ENCODE measurements at regions of chr11 and their contacts with region 1.

Region 1: DNA sequence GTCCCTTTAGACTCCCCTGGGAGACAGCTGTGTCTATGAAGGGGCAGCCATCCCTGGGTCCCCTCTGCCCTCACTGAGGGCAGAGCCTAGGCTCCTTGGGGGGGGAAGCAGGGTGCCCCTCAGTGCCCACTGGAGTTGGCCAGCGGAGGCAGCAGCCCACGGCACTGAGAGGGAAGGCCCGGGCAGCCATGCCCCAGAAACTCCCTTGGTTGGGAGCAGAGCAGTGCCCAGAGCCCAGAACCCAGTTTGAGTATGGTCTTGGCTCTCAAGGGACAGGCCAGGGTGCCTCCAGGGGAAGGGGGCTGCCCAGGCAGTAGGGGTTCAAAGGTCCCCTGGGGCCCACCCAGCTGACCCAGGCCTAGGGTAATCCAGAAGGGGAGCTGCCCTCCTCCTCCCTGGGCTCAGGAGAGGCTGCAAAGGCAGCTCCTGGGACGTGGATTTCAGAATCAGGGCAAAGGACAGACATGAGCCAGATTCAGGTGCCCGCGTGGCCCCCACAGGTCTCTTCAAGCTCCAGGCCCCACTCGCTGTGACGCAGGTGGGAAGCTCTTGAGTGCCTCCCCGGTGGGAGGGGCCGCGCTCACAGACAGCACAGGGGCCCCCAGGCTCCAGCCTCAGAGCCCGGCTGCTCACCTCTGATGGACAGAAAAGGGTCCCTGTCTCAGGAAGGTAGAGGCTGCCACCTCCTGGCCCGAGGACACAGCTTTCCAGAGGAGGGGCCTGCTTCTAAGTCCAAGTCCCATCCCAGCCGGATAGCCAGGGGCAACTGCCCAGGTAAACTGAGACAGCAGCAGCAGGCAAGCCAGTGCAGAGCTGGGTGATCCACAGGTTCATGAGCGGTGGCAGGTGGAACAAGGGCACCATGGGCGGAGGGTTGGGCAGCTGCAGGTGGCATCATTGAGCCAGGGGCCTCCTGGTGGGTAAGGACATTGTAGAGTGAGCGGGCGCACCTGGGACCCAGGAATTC is 2.6 kb downstream of the C11orf21 start:
- DNase-seq: peak; percentile 72
- ATAC-seq: peak; percentile 91
- H3K4me3 Mint-ChIP-seq: no peak overlapping the region
- H3K27ac Mint-ChIP-seq: no peak overlapping the region
- H3K4me1 Mint-ChIP-seq: no peaks in the 10 kb centered on the region
- H3K27me3 Mint-ChIP-seq: peaks cover 4% of the 10 kb centered on the region
- CTCF ChIP-seq: no peak

Region 2: DNA sequence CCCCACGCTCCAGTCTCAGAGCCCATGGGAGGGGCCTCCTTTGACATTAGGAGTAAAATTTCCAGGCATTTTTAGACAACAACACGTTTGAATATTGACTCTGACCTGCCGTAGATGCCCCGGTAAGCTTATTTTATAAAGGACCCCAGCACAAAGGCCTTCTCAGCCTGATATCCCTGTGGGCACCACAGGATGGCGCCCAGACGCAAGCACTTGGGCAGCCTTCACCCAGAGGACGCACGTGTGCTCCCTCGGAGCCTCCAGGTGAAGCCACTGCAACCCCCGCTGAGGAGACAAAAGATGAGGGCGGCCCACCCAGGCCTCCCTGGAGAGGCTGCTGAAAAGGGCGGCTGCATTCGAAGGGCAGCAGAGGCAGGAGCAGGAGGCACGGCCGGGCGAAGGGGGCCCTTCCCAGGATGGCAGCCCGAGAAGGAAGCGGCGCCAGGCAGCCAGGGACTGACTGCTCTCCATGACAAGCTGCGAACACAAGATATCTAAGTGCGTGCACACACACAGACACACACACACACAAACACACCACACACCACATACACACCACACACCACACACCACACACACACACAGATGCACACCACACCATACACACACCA is 112.3 kb before region 1 on chr11:
- CTCF ChIA-PET with region 1: interaction called, 30 read pairs
- POLR2A ChIA-PET with region 1: no interaction called
- DNase-seq: peak; percentile 56
- ATAC-seq: peak; percentile 78
- H3K4me3 Mint-ChIP-seq: no peak overlapping the region
- H3K27ac Mint-ChIP-seq: no peak overlapping the region
- H3K4me1 Mint-ChIP-seq: no peaks in the 10 kb centered on the region
- H3K27me3 Mint-ChIP-seq: peaks cover 5% of the 10 kb centered on the region
- CTCF ChIP-seq: peak; percentile 41

Region 3: GRCh38 chr11:2196970-2197770 is 101.9 kb before region 1 on chr11:
- CTCF ChIA-PET with region 1: interaction called, 58 read pairs
- POLR2A ChIA-PET with region 1: no interaction called
- DNase-seq: peak; percentile 87
- ATAC-seq: peak; percentile 87
- H3K4me3 Mint-ChIP-seq: no peak overlapping the region
- H3K27ac Mint-ChIP-seq: no peak overlapping the region
- H3K4me1 Mint-ChIP-seq: no peaks in the 10 kb centered on the region
- H3K27me3 Mint-ChIP-seq: peaks cover 13% of the 10 kb centered on the region
- CTCF ChIP-seq: peak; percentile 56; the same call in 1 of the 2 replicates

Region 4: DNA sequence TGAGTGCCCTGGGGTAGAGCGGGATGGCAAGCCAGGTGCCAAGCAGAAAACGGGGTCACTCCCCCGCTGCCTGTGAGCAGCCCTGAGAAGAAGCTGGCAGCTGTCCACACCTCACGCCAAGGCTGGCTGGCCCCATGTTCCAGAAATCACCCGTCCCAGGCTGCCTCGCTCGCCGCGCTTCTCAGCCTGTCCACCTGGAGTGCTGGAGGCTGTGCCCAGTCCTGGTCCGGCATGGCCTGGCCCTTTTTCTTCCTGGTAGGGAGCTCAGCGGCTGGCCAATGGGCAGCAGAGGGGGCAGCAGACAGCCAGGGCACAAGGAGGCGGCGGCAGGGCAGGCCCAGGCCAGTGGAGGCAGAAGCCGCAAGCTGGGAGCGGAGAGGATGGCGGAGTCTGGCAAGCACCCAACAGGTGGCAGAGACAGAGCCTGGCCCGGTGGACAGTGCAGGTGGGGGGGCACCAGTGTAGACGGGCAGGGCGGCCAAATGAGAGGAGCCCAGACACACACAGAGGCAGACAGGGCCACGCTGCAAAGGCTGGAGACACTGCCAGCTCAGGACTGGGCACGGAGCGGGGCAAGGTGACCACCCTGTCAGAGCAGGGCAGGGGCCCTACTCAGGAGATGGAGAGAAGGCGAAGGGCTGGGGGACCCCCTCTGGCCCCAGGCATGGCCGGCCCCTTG is 90.2 kb before region 1 on chr11:
- CTCF ChIA-PET with region 1: interaction called, 13 read pairs
- POLR2A ChIA-PET with region 1: no interaction called
- DNase-seq: no peak
- ATAC-seq: peak; percentile 64
- H3K4me3 Mint-ChIP-seq: no peak overlapping the region
- H3K27ac Mint-ChIP-seq: no peak overlapping the region
- H3K4me1 Mint-ChIP-seq: peaks cover 10% of the 10 kb centered on the region
- H3K27me3 Mint-ChIP-seq: peaks cover 15% of the 10 kb centered on the region; the same call in 1 of the 2 replicates
- CTCF ChIP-seq: no peak